Caco-2 (cell line): ENCODE measurements at regions of chr14 and their contacts with region 1.

Region 1: GRCh38 chr14:73662487-73662943 is 17.7 kb downstream of the DNAL1 start:
- DNase-seq: peak; percentile 62 to 74
- H3K4me3 ChIP-seq: no peak overlapping the region
- H3K4me3 Mint-ChIP-seq: no peak overlapping the region
- H3K27ac Mint-ChIP-seq: peak overlapping the region; percentile 65
- H3K4me1 ChIP-seq: peaks cover 17% of the 10 kb centered on the region
- H3K4me1 Mint-ChIP-seq: peaks cover 22% of the 10 kb centered on the region
- H3K27me3 ChIP-seq: no peaks in the 10 kb centered on the region
- H3K27me3 Mint-ChIP-seq: no peaks in the 10 kb centered on the region
- CTCF ChIP-seq: peak; percentile 19 to 23

Region 2: GRCh38 chr14:73503648-73504047 is 158.9 kb before region 1 on chr14:
- CTCF ChIA-PET with region 1: interaction called, 10 read pairs
- POLR2A ChIA-PET with region 1: no interaction called
- intact Hi-C with region 1: no loop called
- DNase-seq: no peak
- H3K4me3 ChIP-seq: no peak overlapping the region
- H3K4me3 Mint-ChIP-seq: no peak overlapping the region
- H3K27ac Mint-ChIP-seq: no peak overlapping the region
- H3K4me1 ChIP-seq: no peaks in the 10 kb centered on the region
- H3K4me1 Mint-ChIP-seq: no peaks in the 10 kb centered on the region
- H3K27me3 ChIP-seq: no peaks in the 10 kb centered on the region
- H3K27me3 Mint-ChIP-seq: no peaks in the 10 kb centered on the region
- CTCF ChIP-seq: no peak

Region 3: GRCh38 chr14:73644531-73645247 is 17.8 kb before region 1 on chr14 and contains the start of gene DNAL1:
- CTCF ChIA-PET with region 1: no interaction called
- POLR2A ChIA-PET with region 1: no interaction called
- intact Hi-C with region 1: loop called (anchors 1 kb)
- DNase-seq: peak; percentile 92 to 96
- H3K4me3 ChIP-seq: peak within 1 kb of the TSS; percentile 88
- H3K4me3 Mint-ChIP-seq: peak within 1 kb of the TSS; percentile 85
- H3K27ac Mint-ChIP-seq: peak within 1 kb of the TSS; percentile 86
- H3K4me1 ChIP-seq: peaks cover 5% of the 10 kb centered on the region; the same call in 1 of the 2 replicates
- H3K4me1 Mint-ChIP-seq: peaks cover 7% of the 10 kb centered on the region
- H3K27me3 ChIP-seq: no peaks in the 10 kb centered on the region
- H3K27me3 Mint-ChIP-seq: no peaks in the 10 kb centered on the region
- CTCF ChIP-seq: no peak
- total RNA-seq, gene DNAL1: 9.6 and 12.2 TPM in 2 replicates

Region 4: GRCh38 chr14:73684627-73685026 is 22.1 kb after region 1 on chr14:
- CTCF ChIA-PET with region 1: no interaction called
- POLR2A ChIA-PET with region 1: no interaction called
- intact Hi-C with region 1: loop called (anchors 1 kb)
- DNase-seq: no peak
- H3K4me3 ChIP-seq: no peak overlapping the region
- H3K4me3 Mint-ChIP-seq: no peak overlapping the region
- H3K27ac Mint-ChIP-seq: no peak overlapping the region
- H3K4me1 ChIP-seq: no peaks in the 10 kb centered on the region
- H3K4me1 Mint-ChIP-seq: peaks cover 7% of the 10 kb centered on the region
- H3K27me3 ChIP-seq: no peaks in the 10 kb centered on the region
- H3K27me3 Mint-ChIP-seq: no peaks in the 10 kb centered on the region
- CTCF ChIP-seq: no peak

Region 5: DNA sequence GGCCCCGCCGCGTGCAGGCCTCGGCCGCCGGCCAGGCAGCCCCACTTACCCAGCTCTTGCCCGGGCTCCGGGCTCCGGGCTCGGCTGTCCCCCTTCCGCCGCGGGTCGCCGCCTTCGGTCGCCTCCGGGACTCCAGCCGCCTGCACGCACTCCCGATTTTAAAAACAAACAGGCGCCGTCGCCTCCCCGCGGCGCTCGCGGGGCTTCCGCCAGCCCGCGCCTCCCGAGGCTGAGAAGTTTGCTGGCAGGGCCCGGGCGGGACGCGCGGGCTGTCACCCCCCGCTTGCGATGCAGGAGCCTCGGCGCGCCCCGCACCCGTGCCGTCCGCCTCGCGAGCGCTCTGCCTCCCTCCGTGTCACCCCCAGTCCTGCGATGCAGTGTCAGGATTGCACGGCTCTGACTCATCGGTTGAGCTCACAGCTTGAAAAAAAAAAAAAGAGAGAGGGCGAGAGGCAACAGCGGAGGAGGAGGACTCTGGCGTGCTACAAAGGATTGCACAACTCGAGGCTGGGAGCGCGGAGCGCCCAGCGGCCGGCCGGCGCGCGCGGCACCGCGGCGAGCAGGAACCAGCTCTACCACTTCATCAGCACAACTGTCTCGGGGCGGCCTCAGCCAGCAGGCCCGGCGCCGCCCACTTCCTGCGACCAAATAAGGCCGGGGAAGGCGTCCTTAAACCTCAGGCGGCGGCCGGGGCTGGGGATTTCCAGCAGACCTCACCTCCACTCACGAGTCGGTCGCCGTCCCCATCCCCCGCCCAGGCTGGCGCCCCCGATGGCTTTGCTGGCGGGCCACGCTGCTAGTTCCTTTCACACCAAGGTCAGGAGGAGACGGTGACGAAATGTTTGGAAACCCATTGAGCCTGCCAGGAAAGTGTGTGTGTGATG is 97.4 kb after region 1 on chr14:
- CTCF ChIA-PET with region 1: no interaction called
- POLR2A ChIA-PET with region 1: no interaction called
- intact Hi-C with region 1: no loop called
- DNase-seq: peak; percentile 96 to 98
- H3K4me3 ChIP-seq: peak overlapping the region; percentile 64
- H3K4me3 Mint-ChIP-seq: peak overlapping the region; percentile 84
- H3K27ac Mint-ChIP-seq: peak overlapping the region; percentile 93
- H3K4me1 ChIP-seq: peaks cover 55% of the 10 kb centered on the region
- H3K4me1 Mint-ChIP-seq: peaks cover 34% of the 10 kb centered on the region
- H3K27me3 ChIP-seq: no peaks in the 10 kb centered on the region
- H3K27me3 Mint-ChIP-seq: no peaks in the 10 kb centered on the region
- CTCF ChIP-seq: peak in 1 of 2 experiments; percentile 19